Lower leg skin (tissue), 4 donors: ENCODE measurements at regions of chr7 and their contacts with region 1.

Region 1: DNA sequence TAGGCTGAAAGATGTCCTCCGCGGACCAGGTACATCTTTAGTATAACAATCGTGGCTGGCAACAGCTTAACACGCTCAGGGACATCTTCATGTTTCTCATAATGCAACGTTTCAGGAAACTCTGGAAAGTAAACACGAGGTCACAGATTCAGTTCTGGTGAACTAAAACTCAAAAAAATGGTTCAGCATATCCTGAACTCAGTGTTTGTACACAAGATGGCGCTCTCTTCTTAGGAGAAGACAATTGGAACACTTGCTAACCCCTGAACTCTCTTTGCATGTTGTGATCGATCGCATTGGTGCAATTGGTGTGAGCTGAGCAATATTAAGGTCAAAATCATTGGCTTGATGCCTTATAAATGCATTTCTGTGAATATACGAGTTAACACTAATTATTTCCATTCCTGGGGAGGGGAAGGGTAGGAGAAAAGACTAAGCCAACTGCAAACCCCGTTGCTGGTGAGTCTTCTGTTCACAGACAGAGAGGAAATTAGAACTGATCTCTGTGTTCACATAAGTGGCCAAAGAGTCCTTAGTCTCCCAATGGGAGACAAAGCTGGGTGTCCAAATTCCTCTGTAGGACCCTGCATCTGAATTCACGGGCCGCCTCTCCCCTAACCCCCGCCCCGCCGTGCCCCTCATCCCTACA is 52.6 kb upstream of the FAM180A start:
- DNase-seq: no peak
- H3K4me3 ChIP-seq: no peak overlapping the region
- CTCF ChIP-seq: peak in 1 of 3 donors; percentile 65
- POLR2A ChIP-seq: no peak

Region 2: DNA sequence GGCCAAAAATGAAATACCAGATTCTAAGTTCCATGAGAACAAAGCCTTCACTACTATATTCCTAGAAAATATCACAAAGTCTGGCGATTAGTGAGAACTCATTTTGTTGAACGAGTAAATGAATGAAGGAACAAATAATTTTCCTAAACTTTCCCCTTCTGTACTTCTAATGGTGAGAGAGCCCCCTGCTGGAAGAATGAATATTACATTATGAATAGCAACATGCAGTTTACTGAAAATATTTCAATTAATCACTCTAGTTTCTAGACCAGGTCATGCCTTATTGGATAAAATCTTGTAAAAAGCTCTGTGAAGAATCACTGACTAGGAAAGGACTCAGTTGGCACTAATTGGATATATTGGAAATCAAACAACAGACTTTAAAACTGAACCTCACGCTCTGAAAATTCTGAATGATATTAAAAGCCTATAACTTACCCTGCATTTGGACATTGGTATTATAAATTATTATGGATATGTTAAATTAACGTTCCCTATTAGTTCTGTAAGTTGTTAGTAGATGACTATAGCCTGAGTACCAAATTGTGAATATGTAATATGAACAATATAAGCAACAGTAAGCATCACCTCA is 208.4 kb after region 1 on chr7:
- intact Hi-C with region 1: loop called (anchors 2 kb)
- DNase-seq: no peak
- H3K4me3 ChIP-seq: no peak overlapping the region
- CTCF ChIP-seq: peak in 1 of 3 donors; percentile 50
- POLR2A ChIP-seq: no peak

Region 3: DNA sequence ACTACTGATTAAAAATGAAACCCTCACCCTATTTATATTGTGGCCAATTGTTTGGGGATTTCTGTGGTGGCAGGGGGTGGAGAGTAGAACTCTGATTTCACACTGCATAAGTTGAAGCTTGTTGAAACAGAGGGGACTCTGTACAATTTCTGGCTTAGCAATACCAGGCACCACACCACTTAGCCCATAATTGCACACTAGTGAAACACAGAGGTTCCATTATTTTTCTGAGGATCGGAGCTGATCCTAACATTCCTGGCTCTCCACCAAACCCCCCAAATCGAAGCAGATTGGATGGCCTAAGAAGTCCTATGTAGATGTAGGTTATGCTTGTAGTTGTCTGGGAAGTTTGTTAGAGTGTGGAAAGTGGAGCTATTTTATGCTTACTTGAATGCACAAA is 1495.4 kb after region 1 on chr7:
- intact Hi-C with region 1: no loop called
- DNase-seq: no peak
- H3K4me3 ChIP-seq: no peak overlapping the region
- CTCF ChIP-seq: no peak
- POLR2A ChIP-seq: no peak